Sciatic nerve (tissue), 2 donors: ENCODE measurements at regions of chr18 and their contacts with region 1.

Region 1: GRCh38 chr18:70075906-70076305 is 128.2 kb upstream of the CD226 start:
- DNase-seq: no peak
- ATAC-seq: no peak

Region 2: DNA sequence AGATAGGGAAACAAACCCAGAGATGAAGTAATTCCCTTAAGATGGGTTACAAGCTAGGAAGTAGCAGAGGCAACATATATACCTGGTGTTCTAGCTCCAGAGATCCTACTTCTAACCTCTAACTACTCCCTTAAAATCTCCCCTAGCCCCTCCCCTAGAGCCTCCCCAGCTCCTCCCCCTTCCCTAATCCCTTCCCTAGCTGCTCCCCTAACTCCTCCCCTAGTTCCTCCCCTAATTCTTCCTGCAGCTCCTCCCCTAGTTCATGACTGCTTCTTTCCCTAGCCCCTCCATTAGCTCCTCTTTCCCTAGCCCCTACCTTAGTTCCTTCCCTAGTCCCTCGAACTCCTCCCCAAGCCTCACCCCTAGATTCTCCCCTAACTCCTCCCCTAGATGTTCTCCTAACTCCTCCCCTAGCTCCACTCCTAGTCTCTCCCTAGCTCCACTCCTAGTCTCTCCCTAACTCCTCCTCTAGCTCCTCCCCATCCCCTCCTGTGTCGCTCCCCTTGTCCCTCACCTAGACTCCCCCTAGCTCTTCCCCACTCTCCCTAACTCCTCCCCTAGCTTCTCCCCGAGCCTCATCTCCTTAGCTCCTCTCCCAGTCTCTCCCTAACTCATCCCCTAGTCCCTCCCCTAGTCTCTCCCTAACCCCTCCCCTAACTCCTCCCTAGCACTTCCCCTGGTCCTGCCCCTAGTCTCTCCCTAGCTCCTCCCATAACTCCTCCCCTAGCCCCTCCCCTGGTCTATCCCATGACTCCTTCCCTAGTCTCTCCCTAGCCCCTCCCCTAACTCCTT is 237.1 kb before region 1 on chr18:
- intact Hi-C with region 1: no loop called
- DNase-seq: no peak
- ATAC-seq: no peak

Region 3: GRCh38 chr18:70004696-70005095 is 71.2 kb before region 1 on chr18:
- intact Hi-C with region 1: loop called (anchors 5 kb)
- DNase-seq: no peak
- ATAC-seq: no peak

Region 4: GRCh38 chr18:70058916-70059315 is 17.0 kb before region 1 on chr18:
- intact Hi-C with region 1: no loop called
- DNase-seq: no peak
- ATAC-seq: no peak

Region 5: DNA sequence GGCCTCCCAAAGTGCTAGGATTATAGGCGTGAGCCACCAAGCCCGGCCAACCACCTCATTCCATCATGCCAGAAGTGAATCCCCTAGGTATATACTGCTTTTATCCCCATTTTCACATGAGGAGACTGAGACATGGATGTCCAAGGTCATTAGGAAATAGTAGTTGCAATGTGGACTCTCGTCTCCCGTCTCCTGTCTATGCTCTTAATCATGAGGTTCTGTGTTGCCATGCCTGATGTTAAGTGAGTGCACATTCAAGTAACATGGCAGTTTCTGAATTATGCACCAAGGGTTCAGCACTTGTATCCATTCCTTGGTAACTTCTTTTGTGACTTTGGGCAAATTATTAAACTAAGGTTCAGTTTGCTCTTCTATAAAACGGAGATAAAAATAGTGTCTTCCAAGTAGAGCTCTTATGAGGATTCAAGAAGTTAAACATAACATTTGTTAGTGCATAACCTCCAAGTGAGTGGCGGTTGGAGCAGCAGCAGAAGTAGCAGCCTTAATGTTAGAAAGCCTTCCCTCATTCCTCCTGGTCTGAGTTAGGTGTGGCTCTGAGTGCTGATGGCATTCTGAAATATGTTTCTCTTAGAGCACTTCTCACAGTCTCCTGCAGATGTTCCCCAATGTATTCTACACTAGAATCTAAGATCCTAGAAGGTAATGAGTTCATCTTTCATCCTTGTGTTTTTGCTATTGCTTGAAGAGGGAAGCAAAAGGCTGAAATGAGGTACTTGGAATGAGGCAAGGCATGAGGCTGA is 234.8 kb after region 1 on chr18:
- intact Hi-C with region 1: no loop called
- DNase-seq: no peak
- ATAC-seq: no peak